Activated CD4-positive, alpha-beta T cell treated with anti-CD3 and anti-CD28 coated beads for 36 hours (primary cell): ENCODE measurements at regions of chr1 and their contacts with region 1.

Region 1: DNA sequence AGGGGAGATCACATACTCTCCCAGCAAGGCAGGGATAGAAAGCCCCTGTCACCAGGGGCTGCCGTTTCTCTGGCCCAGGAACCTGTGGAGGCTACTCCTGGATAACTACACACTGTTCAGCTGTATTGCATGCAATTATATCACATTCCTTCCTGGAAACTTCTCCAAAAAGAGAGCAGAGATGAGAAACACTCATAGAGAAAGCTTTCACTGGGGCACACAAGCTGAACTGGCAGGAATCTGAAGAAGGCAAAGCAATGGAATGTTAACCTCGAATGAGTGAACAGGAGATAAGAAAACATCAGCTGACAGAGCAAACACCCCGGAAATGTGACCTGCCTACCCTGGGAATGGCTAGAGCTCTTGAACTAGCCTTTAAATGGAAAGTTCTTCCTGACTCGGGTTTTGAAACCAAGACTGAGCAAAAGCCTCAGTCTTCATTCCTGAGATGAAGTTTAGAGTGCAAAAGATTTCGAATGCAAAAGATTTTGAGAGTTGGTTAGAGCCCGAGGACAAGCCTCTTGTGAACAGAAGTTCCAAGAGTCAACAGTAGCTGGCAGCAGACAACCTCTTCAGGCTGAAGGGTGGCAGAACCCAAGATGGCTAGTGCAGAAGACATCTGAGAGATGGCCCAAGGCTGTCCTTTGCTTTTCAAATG is 32.3 kb downstream of the CCN1 start:
- DNase-seq: no peak
- ATAC-seq: no peak
- H3K4me3 Mint-ChIP-seq: no peak overlapping the region
- H3K27ac Mint-ChIP-seq: no peak overlapping the region
- H3K4me1 Mint-ChIP-seq: no peaks in the 10 kb centered on the region
- H3K27me3 Mint-ChIP-seq: no peaks in the 10 kb centered on the region

Region 2: DNA sequence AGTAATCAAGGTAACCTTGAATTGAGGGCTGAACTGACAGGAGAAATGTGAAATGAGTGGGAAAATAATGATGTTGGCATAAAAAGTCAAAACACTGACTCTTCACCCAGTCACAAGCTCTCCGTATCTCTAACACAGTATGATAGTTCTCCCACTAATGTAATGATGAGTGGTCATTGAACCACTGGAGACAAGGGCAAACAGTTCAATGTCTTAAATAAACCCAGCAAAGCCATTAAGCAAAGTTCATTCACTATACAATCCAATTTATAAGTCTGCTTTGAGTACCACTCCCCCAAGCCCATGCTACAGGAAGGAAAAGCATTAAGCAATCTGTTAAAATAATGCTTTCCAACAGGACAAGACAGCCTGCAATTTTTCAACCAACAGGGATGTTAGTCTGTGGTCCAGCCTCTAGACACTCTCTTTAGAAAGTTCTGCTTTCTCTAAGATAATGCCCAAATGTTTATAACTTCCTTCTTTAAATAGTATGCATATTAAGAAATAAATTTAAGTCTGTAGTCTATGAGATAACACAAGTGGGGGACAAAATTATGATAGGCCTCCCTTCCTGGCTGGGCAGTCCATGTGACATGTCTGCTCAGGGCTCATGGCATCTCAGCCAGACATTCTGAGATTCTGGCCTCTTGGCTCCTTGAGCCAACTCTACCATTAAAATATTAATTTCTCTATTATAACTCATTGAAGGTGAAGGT is 122.4 kb before region 1 on chr1:
- CTCF ChIA-PET with region 1: no interaction called
- POLR2A ChIA-PET with region 1: no interaction called
- intact Hi-C with region 1: no loop called
- DNase-seq: no peak
- ATAC-seq: no peak
- H3K4me3 Mint-ChIP-seq: no peak overlapping the region
- H3K27ac Mint-ChIP-seq: no peak overlapping the region
- H3K4me1 Mint-ChIP-seq: no peaks in the 10 kb centered on the region
- H3K27me3 Mint-ChIP-seq: peaks cover 17% of the 10 kb centered on the region

Region 3: GRCh38 chr1:85692730-85693314 is 80.0 kb after region 1 on chr1:
- CTCF ChIA-PET with region 1: no interaction called
- POLR2A ChIA-PET with region 1: no interaction called
- intact Hi-C with region 1: loop called in 1 of 2 experiments (anchors 5 kb)
- DNase-seq: no peak
- ATAC-seq: no peak
- H3K4me3 Mint-ChIP-seq: no peak overlapping the region
- H3K27ac Mint-ChIP-seq: no peak overlapping the region
- H3K4me1 Mint-ChIP-seq: peaks cover 6% of the 10 kb centered on the region
- H3K27me3 Mint-ChIP-seq: no peaks in the 10 kb centered on the region